CD4-positive, alpha-beta T cell (primary cell): ENCODE measurements at regions of chr20 and their contacts with region 1.

Region 1: GRCh38 chr20:43949741-43950618 is 35.3 kb downstream of the TOX2 start:
- DNase-seq: peak; percentile 49 to 87 (median 65)
- ATAC-seq: peak; percentile 85
- H3K4me3 ChIP-seq: peak overlapping the region; percentile 1
- H3K4me3 Mint-ChIP-seq: peak overlapping the region; percentile 69
- H3K27ac ChIP-seq: no peak overlapping the region
- H3K27ac Mint-ChIP-seq: peak overlapping the region; percentile 16
- H3K4me1 ChIP-seq: peaks cover 93% of the 10 kb centered on the region
- H3K4me1 Mint-ChIP-seq: peaks cover 87% of the 10 kb centered on the region
- H3K27me3 ChIP-seq: no peaks in the 10 kb centered on the region
- H3K27me3 Mint-ChIP-seq: no peaks in the 10 kb centered on the region
- CTCF ChIP-seq: no peak

Region 2: GRCh38 chr20:43776643-43777042 is 173.3 kb before region 1 on chr20:
- CTCF ChIA-PET with region 1: no interaction called
- POLR2A ChIA-PET with region 1: no interaction called
- intact Hi-C with region 1: no loop called
- DNase-seq: no peak
- ATAC-seq: no peak
- H3K4me3 ChIP-seq: no peak overlapping the region
- H3K4me3 Mint-ChIP-seq: no peak overlapping the region
- H3K27ac ChIP-seq: no peak overlapping the region
- H3K27ac Mint-ChIP-seq: no peak overlapping the region
- H3K4me1 ChIP-seq: no peaks in the 10 kb centered on the region
- H3K4me1 Mint-ChIP-seq: no peaks in the 10 kb centered on the region
- H3K27me3 ChIP-seq: peaks cover 0 to 3% of the 10 kb centered on the region in 2 experiments
- H3K27me3 Mint-ChIP-seq: peaks cover 5% of the 10 kb centered on the region
- CTCF ChIP-seq: no peak

Region 3: DNA sequence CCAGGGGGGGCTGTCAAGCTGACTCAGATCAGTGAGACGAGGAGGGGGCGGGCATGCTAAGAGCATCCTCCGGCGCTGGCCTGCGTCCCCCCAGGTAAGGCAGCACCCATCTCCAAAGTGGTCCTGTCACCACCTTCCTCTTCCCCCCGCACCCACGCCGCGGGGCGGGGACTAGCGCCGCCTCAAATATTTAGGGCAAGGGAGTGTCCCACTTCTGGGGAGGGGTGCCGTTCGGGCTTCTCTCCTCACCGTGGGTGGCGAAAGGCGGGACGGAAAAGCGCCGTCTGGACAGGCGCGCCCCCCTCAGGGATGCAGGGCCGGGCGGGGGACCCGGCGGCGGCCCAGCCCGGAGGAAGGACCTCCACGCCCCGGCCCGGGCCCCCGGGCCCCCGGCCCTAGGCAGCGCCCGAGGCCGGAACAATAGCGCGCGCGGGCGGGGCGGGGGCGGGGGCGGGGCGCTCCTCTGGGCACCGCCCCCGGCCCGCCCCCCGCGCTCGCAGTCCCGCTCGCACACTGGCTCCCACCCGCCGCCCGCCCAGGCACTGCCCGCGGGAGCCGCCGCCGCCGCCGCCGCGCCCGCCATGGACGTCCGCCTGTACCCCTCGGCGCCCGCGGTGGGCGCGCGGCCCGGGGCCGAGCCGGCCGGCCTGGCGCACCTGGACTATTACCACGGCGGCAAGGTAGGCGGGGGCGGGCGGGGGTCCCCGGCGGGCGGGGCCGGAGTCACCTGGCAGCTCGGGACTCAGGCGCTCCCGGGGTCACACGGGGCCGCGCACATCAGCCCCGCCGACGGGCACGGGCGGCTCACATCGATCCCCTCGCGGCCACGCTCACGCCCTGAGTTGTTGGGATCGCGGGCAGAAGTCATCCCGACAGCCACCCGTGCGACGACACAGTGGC is 35.4 kb before region 1 on chr20 and contains the start of gene TOX2:
- CTCF ChIA-PET with region 1: no interaction called
- POLR2A ChIA-PET with region 1: no interaction called
- intact Hi-C with region 1: loop called in 1 of 2 experiments (anchors 5 kb)
- DNase-seq: peak; percentile 13 to 77 (median 46)
- ATAC-seq: peak; percentile 74
- H3K4me3 ChIP-seq: peak within 1 kb of the TSS; percentile 58
- H3K4me3 Mint-ChIP-seq: peak within 1 kb of the TSS; percentile 96
- H3K27ac ChIP-seq: no peak within 1 kb of the TSS
- H3K27ac Mint-ChIP-seq: peak within 1 kb of the TSS; percentile 82
- H3K4me1 ChIP-seq: peaks cover 33% of the 10 kb centered on the region
- H3K4me1 Mint-ChIP-seq: peaks cover 27% of the 10 kb centered on the region
- H3K27me3 ChIP-seq: peaks cover 35% of the 10 kb centered on the region in 2 experiments
- H3K27me3 Mint-ChIP-seq: peaks cover 40% of the 10 kb centered on the region
- CTCF ChIP-seq: no peak
- total RNA-seq, gene TOX2: 3.3 to 3.9 TPM

Region 4: GRCh38 chr20:43963872-43964791 is 14.2 kb after region 1 on chr20:
- CTCF ChIA-PET with region 1: no interaction called
- POLR2A ChIA-PET with region 1: interaction called, 13 read pairs
- intact Hi-C with region 1: no loop called
- DNase-seq: peak; percentile 25 to 83 (median 51)
- ATAC-seq: peak; percentile 90
- H3K4me3 ChIP-seq: no peak overlapping the region
- H3K4me3 Mint-ChIP-seq: peak overlapping the region; percentile 45
- H3K27ac ChIP-seq: no peak overlapping the region
- H3K27ac Mint-ChIP-seq: no peak overlapping the region
- H3K4me1 ChIP-seq: peaks cover 66% of the 10 kb centered on the region
- H3K4me1 Mint-ChIP-seq: peaks cover 37% of the 10 kb centered on the region
- H3K27me3 ChIP-seq: no peaks in the 10 kb centered on the region
- H3K27me3 Mint-ChIP-seq: no peaks in the 10 kb centered on the region
- CTCF ChIP-seq: no peak

Region 5: GRCh38 chr20:44001667-44002596 is 52.0 kb after region 1 on chr20:
- CTCF ChIA-PET with region 1: no interaction called
- POLR2A ChIA-PET with region 1: no interaction called
- intact Hi-C with region 1: no loop called
- DNase-seq: no peak
- ATAC-seq: no peak
- H3K4me3 ChIP-seq: no peak overlapping the region
- H3K4me3 Mint-ChIP-seq: no peak overlapping the region
- H3K27ac ChIP-seq: no peak overlapping the region
- H3K27ac Mint-ChIP-seq: no peak overlapping the region
- H3K4me1 ChIP-seq: peaks cover 3% of the 10 kb centered on the region
- H3K4me1 Mint-ChIP-seq: peaks cover 17% of the 10 kb centered on the region
- H3K27me3 ChIP-seq: peaks cover 0 to 4% of the 10 kb centered on the region in 2 experiments
- H3K27me3 Mint-ChIP-seq: no peaks in the 10 kb centered on the region
- CTCF ChIP-seq: no peak